ENCODE measurements at regions of chr2 and their contacts with region 1.

Region 1: GRCh38 chr2:98465456-98466226 is 21.0 kb downstream of the INPP4A start:
- DNase-seq: peak; percentile 83
- H3K4me3 Mint-ChIP-seq: peak overlapping the region; percentile 66
- H3K27ac Mint-ChIP-seq: peak overlapping the region; percentile 95
- H3K4me1 Mint-ChIP-seq: peaks cover 88% of the 10 kb centered on the region
- H3K27me3 Mint-ChIP-seq: no peaks in the 10 kb centered on the region

Region 2: GRCh38 chr2:97995734-97996624 is 469.7 kb before region 1 on chr2 and contains the start of gene TMEM131:
- CTCF ChIA-PET with region 1: no interaction called
- intact Hi-C with region 1: loop called (anchors 5 kb)
- DNase-seq: peak; percentile 96
- H3K4me3 Mint-ChIP-seq: peak within 1 kb of the TSS; percentile 95
- H3K27ac Mint-ChIP-seq: peak within 1 kb of the TSS; percentile 93
- H3K4me1 Mint-ChIP-seq: peaks cover 32% of the 10 kb centered on the region
- H3K27me3 Mint-ChIP-seq: no peaks in the 10 kb centered on the region
- total RNA-seq, gene TMEM131: 18.5 to 19.2 TPM

Region 3: DNA sequence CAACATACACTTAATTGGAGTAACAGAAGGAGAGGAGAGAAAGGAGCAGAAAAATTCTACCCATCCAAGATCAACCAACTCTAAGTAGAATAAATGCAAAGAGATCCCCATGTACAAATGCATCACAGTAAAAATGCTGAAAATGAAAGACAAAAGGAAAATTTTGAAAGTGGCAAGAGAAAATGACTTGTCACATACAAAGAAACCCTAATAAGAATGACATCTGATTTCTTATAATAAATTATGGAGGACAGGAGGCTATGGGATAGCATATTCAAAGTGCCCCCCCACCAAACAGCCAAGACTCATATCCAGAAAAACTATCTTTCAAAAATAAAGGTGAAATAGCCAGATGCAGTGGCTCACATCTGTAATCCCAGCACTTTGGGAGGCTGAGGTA is 43.2 kb before region 1 on chr2:
- CTCF ChIA-PET with region 1: no interaction called
- intact Hi-C with region 1: no loop called
- DNase-seq: no peak
- H3K4me3 Mint-ChIP-seq: no peak overlapping the region
- H3K27ac Mint-ChIP-seq: no peak overlapping the region
- H3K4me1 Mint-ChIP-seq: no peaks in the 10 kb centered on the region
- H3K27me3 Mint-ChIP-seq: no peaks in the 10 kb centered on the region

Region 4: GRCh38 chr2:98438190-98439133 is 27.2 kb before region 1 on chr2:
- CTCF ChIA-PET with region 1: no interaction called
- intact Hi-C with region 1: loop called (anchors 1 kb)
- DNase-seq: no peak
- H3K4me3 Mint-ChIP-seq: no peak overlapping the region
- H3K27ac Mint-ChIP-seq: peak overlapping the region; percentile 73
- H3K4me1 Mint-ChIP-seq: peaks cover 19% of the 10 kb centered on the region
- H3K27me3 Mint-ChIP-seq: no peaks in the 10 kb centered on the region

Region 5: GRCh38 chr2:98455494-98455976 is 10.1 kb before region 1 on chr2:
- CTCF ChIA-PET with region 1: interaction called, 21 read pairs
- intact Hi-C with region 1: loop called (anchors 1 kb)
- DNase-seq: peak; percentile 66
- H3K4me3 Mint-ChIP-seq: peak overlapping the region; percentile 59
- H3K27ac Mint-ChIP-seq: peak overlapping the region; percentile 89
- H3K4me1 Mint-ChIP-seq: peaks cover 98% of the 10 kb centered on the region
- H3K27me3 Mint-ChIP-seq: no peaks in the 10 kb centered on the region

Region 6: GRCh38 chr2:98487806-98488651 is 22.4 kb after region 1 on chr2:
- CTCF ChIA-PET with region 1: interaction called, 17 read pairs
- intact Hi-C with region 1: no loop called
- DNase-seq: peak; percentile 70
- H3K4me3 Mint-ChIP-seq: no peak overlapping the region
- H3K27ac Mint-ChIP-seq: peak overlapping the region; percentile 20
- H3K4me1 Mint-ChIP-seq: peaks cover 88% of the 10 kb centered on the region
- H3K27me3 Mint-ChIP-seq: no peaks in the 10 kb centered on the region

Region 7: DNA sequence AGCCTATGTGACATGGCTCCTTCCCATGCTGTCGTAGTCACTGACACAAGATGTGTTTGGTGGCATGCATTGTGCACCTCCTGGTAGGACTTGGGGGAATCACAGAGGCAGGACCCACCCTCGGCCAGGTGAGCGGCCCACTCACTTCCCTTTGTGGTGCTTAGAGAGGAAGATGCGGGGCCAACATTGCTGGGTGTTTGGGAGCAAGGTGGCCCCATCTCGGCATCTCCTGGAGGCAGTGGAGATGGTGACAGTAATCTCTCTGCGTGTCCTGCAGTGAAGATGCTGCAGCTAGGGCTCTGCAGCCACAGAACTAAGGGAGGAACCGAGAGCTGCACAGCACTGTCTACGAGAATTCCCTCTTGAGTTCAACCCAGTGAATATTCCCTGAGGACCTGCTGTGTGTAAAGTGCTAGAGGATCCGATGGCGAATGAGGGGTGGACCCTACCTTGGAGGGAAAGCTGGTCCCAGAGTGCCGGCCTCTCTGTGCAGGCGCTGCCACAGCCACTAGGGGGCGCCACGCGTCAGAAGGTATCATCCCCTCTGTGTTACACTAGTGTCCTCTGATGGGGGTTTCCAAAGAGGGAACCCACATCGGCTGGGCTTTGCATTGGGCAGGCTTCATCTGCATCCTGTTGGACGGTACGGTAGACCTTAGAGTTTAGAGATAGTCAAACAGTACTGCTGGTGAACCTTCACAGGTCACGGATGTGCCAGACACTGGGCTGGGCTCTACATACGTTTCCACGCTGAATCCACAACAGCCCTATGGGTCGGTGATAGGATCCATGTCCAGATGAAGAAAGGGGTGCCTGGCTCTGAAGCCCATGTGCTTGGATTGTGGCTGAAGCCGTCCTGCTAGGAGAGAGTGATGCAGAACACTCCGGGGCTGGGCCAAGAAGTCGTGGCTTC is 103.5 kb after region 1 on chr2:
- CTCF ChIA-PET with region 1: no interaction called
- intact Hi-C with region 1: no loop called
- DNase-seq: peak; percentile 84
- H3K4me3 Mint-ChIP-seq: no peak overlapping the region
- H3K27ac Mint-ChIP-seq: no peak overlapping the region
- H3K4me1 Mint-ChIP-seq: no peaks in the 10 kb centered on the region
- H3K27me3 Mint-ChIP-seq: no peaks in the 10 kb centered on the region

Measured in activated naive CD4-positive, alpha-beta T cell treated with anti-CD3 and anti-CD28 coated beads for 36 hours (primary cell).